ENCODE measurements at regions of chr1 and their contacts with region 1.

Region 1: DNA sequence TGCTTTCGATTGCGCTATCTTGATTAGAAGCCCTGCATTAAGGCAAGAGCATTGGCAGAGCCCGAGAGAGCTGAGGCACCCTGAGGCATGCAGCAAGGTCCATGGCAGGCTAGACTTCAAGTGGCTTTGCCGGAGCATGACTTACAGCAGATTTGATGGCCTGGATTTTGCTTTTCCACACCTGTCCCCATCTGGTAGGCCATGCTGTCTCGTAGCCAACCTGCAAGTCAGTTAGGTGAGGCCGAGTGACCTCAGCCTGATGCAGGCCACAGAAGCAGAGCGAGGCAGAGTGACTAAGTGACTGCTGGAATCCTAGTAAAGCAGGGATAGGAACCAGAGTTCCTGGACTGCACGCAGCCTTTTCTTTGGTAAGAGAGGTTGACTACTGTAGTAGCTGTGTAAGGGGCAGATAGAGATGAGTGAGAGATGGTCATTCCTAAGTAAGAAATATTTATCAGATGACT is 148.9 kb downstream of the PBX1 start:
- DNase-seq: no peak
- H3K4me3 ChIP-seq: no peak overlapping the region
- H3K27ac ChIP-seq: peak overlapping the region; percentile 21
- H3K4me1 ChIP-seq: peaks cover 11 to 27% (median 23%) of the 10 kb centered on the region in 4 experiments
- H3K27me3 ChIP-seq: no peaks in the 10 kb centered on the region
- CTCF ChIP-seq: no peak
- EP300 ChIP-seq: no peak
- POLR2A ChIP-seq: no peak
- RAD21 ChIP-seq: no peak

Region 2: GRCh38 chr1:164689672-164690598 is 18.0 kb before region 1 on chr1:
- CTCF ChIA-PET with region 1: interaction called, 37 read pairs
- POLR2A ChIA-PET with region 1: interaction called, 3 read pairs
- DNase-seq: no peak
- H3K4me3 ChIP-seq: 0 out of 8 replicates have a peak overlapping the region, but pooled peaks of 1 of the 4 experiments have one; percentile 2
- H3K27ac ChIP-seq: 0 out of 2 replicates have a peak overlapping the region, but pooled peaks have one; percentile 22
- H3K4me1 ChIP-seq: peaks cover 0 to 7% (median 2%) of the 10 kb centered on the region in 4 experiments; a peak in 4 of 7 replicates
- H3K27me3 ChIP-seq: no peaks in the 10 kb centered on the region
- CTCF ChIP-seq: no peak
- EP300 ChIP-seq: no peak
- POLR2A ChIP-seq: no peak
- RAD21 ChIP-seq: no peak

Region 3: DNA sequence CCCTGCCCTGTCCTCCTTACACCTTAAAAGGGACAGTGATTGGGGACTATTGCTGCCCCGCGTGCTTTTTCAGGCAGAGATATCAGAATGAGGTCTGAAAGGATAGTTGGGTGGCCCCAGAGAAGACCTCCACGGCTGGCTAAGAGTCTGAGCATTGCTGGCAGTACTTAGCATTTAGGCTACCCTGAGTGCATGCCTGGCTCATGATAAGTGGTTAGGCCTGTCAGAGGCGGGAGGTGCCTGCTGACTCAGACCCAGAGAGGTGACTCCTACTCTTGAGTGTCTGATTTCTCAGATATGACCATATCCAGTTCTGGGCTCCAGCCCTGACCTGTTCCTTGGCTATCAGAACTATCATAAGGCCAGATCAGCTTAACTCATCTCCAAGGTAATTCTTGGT is 64.7 kb after region 1 on chr1:
- CTCF ChIA-PET with region 1: interaction called, 30 read pairs
- POLR2A ChIA-PET with region 1: no interaction called
- DNase-seq: no peak
- H3K4me3 ChIP-seq: no peak overlapping the region
- H3K27ac ChIP-seq: peak overlapping the region; percentile 25; the same call in 1 of the 2 replicates
- H3K4me1 ChIP-seq: peaks cover 3 to 25% (median 13%) of the 10 kb centered on the region in 4 experiments; a peak in 6 of 7 replicates
- H3K27me3 ChIP-seq: no peaks in the 10 kb centered on the region
- CTCF ChIP-seq: no peak
- EP300 ChIP-seq: no peak
- POLR2A ChIP-seq: no peak
- RAD21 ChIP-seq: no peak

Region 4: GRCh38 chr1:164858101-164858632 is 150.3 kb after region 1 on chr1:
- CTCF ChIA-PET with region 1: no interaction called
- POLR2A ChIA-PET with region 1: no interaction called
- DNase-seq: no peak
- H3K4me3 ChIP-seq: no peak overlapping the region
- H3K27ac ChIP-seq: no peak overlapping the region
- H3K4me1 ChIP-seq: peaks cover 0 to 4% (median 0%) of the 10 kb centered on the region in 4 experiments; a peak in 1 of 7 replicates
- H3K27me3 ChIP-seq: no peaks in the 10 kb centered on the region; a peak in 1 of 7 replicates
- CTCF ChIP-seq: no peak
- EP300 ChIP-seq: no peak
- POLR2A ChIP-seq: no peak
- RAD21 ChIP-seq: no peak

Measured in H1 (cell line).